ENCODE measurements at regions of chr16 and their contacts with region 1.

Region 1: DNA sequence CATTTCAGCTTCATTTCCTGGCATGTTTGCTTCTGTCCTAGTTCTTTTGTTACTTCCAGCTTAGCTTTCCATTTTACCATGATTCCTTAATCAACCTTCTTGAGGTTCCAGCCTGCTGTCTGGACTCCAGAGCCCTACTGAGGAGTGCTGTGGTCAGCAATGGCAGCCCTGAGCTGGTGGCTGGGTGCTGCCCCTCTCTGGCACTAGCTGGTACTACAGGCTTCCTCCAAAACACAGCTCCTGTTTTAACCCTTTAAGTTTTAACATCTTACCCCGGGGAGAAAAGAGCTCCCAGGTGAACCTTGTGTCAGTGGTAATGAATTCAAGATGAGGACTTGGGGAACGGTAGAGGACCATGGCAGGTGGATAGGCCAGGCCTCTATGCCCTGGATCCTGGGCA is 395.5 kb downstream of the TMEM114 start:
- DNase-seq: peak; percentile 68 to 75 (median 70)
- ATAC-seq: peak; percentile 96
- H3K4me3 ChIP-seq: no peak overlapping the region
- H3K27ac ChIP-seq: no peak overlapping the region
- H3K4me1 ChIP-seq: peaks cover 0 to 4% of the 10 kb centered on the region in 2 experiments; a peak in 2 of 5 replicates
- H3K27me3 ChIP-seq: peaks cover 12 to 19% of the 10 kb centered on the region in 2 experiments
- CTCF ChIP-seq: peak; percentile 84 to 94 (median 86)
- EP300 ChIP-seq: no peak
- POLR2A ChIP-seq: no peak
- RAD21 ChIP-seq: peak; percentile 62 to 92

Region 2: DNA sequence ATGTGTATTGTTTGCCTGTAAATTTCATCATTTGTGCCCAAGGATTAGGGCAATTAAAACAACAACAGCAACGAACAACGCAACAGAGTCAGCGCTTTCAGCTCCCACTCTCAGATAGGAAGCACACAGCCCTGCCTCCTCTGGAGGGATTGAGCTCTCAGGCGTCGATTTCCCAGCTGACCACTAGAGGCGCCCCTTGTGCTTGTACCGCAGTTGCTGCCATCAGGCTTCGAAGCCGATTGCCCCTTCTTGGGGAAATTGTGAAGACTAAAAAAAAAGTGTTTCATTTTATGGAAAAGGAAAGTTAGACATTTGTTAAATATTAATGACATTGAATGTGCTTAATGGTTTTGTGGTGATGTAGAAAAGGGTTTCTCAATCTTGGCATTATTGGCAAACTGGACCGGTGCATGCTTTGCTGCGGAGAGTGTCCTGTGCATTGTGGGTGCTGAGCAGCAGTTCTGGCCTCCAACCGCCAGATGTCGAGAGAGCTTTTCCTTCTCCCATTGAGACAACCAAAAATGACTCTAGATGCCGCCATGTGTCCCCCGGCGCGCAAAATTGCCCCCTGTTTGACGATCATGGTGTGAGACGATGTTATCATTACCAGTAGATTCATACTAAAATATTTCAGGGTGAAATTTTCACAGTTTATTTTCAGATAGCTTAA is 1512.5 kb before region 1 on chr16:
- CTCF ChIA-PET with region 1: no interaction called
- POLR2A ChIA-PET with region 1: no interaction called
- in situ Hi-C with region 1: loop called (anchors 25 kb)
- intact Hi-C with region 1: no loop called
- DNase-seq: peak; percentile 59 to 70 (median 65)
- ATAC-seq: peak; percentile 89
- H3K4me3 ChIP-seq: no peak overlapping the region
- H3K27ac ChIP-seq: no peak overlapping the region
- H3K4me1 ChIP-seq: no peaks in the 10 kb centered on the region
- H3K27me3 ChIP-seq: no peaks in the 10 kb centered on the region
- CTCF ChIP-seq: peak; percentile 65 to 90 (median 82)
- EP300 ChIP-seq: no peak
- POLR2A ChIP-seq: no peak
- RAD21 ChIP-seq: no peak

Measured in K562 (cell line).